Transverse colon (tissue), 4 donors: ENCODE measurements at regions of chr6 and their contacts with region 1.

Region 1: GRCh38 chr6:36885461-36886401 is at the start of gene C6orf89:
- DNase-seq: peak; percentile 98
- H3K4me3 ChIP-seq: peak within 1 kb of the TSS; percentile 55 to 98 (median 87)
- H3K27ac ChIP-seq: peak within 1 kb of the TSS; percentile 81 to 91 (median 86)
- H3K4me1 ChIP-seq: peaks cover 0 to 28% (median 13%) of the 10 kb centered on the region in 4 donors
- H3K27me3 ChIP-seq: no peaks in the 10 kb centered on the region
- CTCF ChIP-seq: peak; percentile 81 to 99 (median 87)
- EP300 ChIP-seq: no peak
- POLR2A ChIP-seq: peak; percentile 79
- total RNA-seq, gene C6orf89: 7.8 to 41.8 (median 28.2) TPM

Region 2: GRCh38 chr6:36985808-36986703 is 100.3 kb after region 1 on chr6 and contains the start of gene MTCH1:
- in situ Hi-C with region 1: loop called in 1 of 4 experiments (anchors 10 kb)
- intact Hi-C with region 1: no loop called
- DNase-seq: peak; percentile 90
- H3K4me3 ChIP-seq: peak within 1 kb of the TSS; percentile 68 to 99 (median 90)
- H3K27ac ChIP-seq: peak within 1 kb of the TSS; percentile 93 to 96 (median 94)
- H3K4me1 ChIP-seq: peaks cover 28 to 51% (median 38%) of the 10 kb centered on the region in 4 donors
- H3K27me3 ChIP-seq: no peaks in the 10 kb centered on the region
- CTCF ChIP-seq: no peak
- EP300 ChIP-seq: no peak
- POLR2A ChIP-seq: peak; percentile 78
- total RNA-seq, gene MTCH1: 123 to 190 (median 152) TPM

Region 3: GRCh38 chr6:37018198-37019064 is 132.7 kb after region 1 on chr6:
- in situ Hi-C with region 1: loop called in 3 of 4 experiments (anchors 25 kb)
- intact Hi-C with region 1: no loop called
- DNase-seq: peak; percentile 92
- H3K4me3 ChIP-seq: no peak overlapping the region
- H3K27ac ChIP-seq: peak overlapping the region; percentile 30 to 45 (median 42)
- H3K4me1 ChIP-seq: peaks cover 0 to 19% (median 8%) of the 10 kb centered on the region in 4 donors
- H3K27me3 ChIP-seq: no peaks in the 10 kb centered on the region
- CTCF ChIP-seq: peak; percentile 83 to 93 (median 89)
- EP300 ChIP-seq: no peak
- POLR2A ChIP-seq: no peak

Region 4: GRCh38 chr6:37207903-37208456 is 322.2 kb after region 1 on chr6:
- in situ Hi-C with region 1: loop called (anchors 10 to 25 kb)
- intact Hi-C with region 1: loop called (anchors 10 kb)
- DNase-seq: peak; percentile 92
- H3K4me3 ChIP-seq: no peak overlapping the region
- H3K27ac ChIP-seq: no peak overlapping the region
- H3K4me1 ChIP-seq: peaks cover 11 to 32% (median 11%) of the 10 kb centered on the region in 4 donors
- H3K27me3 ChIP-seq: no peaks in the 10 kb centered on the region
- CTCF ChIP-seq: peak; percentile 71 to 90 (median 84)
- EP300 ChIP-seq: no peak
- POLR2A ChIP-seq: no peak

Region 5: DNA sequence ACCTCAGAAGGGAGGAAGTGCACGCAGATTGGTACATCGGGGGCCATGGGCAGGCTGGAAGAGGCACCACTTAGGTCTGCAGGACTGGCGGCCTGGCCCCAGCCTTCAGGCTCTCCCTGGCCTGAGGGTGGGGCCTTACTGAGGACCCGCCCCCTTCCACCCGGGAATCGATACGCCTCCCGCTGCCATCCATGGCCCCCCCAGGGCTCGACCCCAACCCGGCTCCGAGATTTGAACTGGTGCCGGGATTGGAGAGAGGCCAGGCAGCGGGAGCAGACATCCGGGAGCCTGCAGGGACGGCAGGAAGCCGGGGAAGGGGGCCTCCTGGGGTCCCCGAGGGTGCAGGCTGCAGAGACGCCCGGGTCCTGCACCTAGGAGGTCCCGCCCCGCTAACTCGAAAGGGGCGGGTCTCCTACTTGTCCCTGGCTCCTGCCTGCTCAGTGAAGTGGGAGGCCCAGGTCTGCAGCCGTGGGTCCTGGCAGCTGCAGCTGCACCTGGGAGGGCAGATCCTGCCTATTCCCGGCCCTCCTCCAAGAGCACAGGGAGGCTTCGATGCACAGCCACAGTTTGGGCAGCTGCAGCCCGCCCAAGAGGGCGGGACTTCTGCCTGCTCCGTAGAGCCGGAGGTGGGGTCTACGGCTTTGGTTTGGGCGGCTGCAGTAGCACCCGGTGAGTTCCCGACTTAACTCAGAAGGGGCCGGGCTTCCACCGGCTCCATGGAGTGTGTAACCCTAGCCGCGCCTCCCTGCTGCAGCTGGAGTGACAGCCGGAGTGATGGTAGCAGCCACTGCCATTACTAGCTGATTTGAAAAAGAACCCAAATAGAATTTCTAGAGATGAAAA is 336.6 kb after region 1 on chr6:
- in situ Hi-C with region 1: loop called (anchors 10 to 25 kb)
- intact Hi-C with region 1: loop called (anchors 10 kb)
- DNase-seq: peak; percentile 81
- H3K4me3 ChIP-seq: peak overlapping the region; percentile 40 to 78 (median 50)
- H3K27ac ChIP-seq: peak overlapping the region; percentile 58 to 72 (median 61)
- H3K4me1 ChIP-seq: peaks cover 0 to 15% (median 10%) of the 10 kb centered on the region in 4 donors
- H3K27me3 ChIP-seq: no peaks in the 10 kb centered on the region
- CTCF ChIP-seq: no peak
- EP300 ChIP-seq: no peak
- POLR2A ChIP-seq: no peak